Sigmoid colon (tissue), 7 donors: ENCODE measurements at regions of chr12 and their contacts with region 1.

Region 1: GRCh38 chr12:68610370-68611093 is at the start of gene RAP1B:
- DNase-seq: peak; percentile 94
- H3K4me3 ChIP-seq: peak within 1 kb of the TSS; percentile 62 to 94 (median 83)
- H3K27ac ChIP-seq: peak within 1 kb of the TSS; percentile 88 to 99 (median 97)
- H3K4me1 ChIP-seq: peaks cover 0 to 43% (median 33%) of the 10 kb centered on the region in 4 donors
- H3K27me3 ChIP-seq: no peaks in the 10 kb centered on the region
- CTCF ChIP-seq: no peak
- EP300 ChIP-seq: no peak
- POLR2A ChIP-seq: peak; percentile 75 to 78
- total RNA-seq, gene RAP1B: 197 to 251 (median 223) TPM

Region 2: GRCh38 chr12:68358532-68359485 is 251.7 kb before region 1 on chr12:
- intact Hi-C with region 1: loop called (anchors 2 kb)
- DNase-seq: peak; percentile 80
- H3K4me3 ChIP-seq: no peak overlapping the region
- H3K27ac ChIP-seq: peak overlapping the region in 2 of 4 donors; percentile 54 to 68
- H3K4me1 ChIP-seq: peaks cover 0 to 23% (median 13%) of the 10 kb centered on the region in 4 donors
- H3K27me3 ChIP-seq: no peaks in the 10 kb centered on the region
- CTCF ChIP-seq: peak; percentile 37 to 71 (median 62)
- EP300 ChIP-seq: no peak
- POLR2A ChIP-seq: no peak

Region 3: DNA sequence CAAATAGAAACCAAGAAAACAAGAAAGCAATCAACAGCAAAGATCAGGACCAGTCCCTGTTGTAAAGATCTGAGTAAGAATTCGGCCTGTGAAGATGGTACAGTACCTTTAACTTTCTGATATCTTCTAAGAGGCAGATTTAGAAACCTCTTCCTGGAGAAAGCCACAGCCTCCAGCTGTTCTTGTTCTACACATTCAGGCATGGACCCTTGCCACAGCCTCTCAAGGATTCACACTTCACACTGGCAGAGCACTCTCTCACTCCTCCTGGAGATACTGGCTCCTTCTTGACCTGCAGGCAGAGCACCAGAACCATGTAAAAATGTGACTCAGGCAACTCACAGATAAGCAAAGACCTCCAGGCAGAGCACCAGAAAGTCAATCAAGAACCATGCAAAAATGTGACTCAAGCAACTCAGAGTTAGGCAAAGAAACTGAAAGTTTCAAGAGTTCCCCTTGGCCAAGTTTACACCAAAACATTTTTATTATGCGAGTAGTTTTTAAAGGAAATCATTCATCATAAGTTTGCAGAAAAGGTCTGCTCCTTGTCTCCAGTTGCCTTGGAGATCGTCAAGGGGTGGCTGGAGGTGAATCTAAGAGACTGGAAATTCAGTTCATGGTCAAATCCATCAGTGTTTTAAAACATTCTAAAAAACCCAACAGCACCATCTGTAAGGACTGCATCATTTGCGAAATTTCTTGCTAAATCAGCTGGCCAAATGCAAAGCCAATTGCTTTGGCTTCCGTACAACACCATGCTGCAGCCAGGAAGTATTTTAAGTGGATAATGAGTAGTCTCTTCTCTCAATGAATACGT is 159.1 kb before region 1 on chr12:
- intact Hi-C with region 1: loop called (anchors 2 kb)
- DNase-seq: peak; percentile 76
- H3K4me3 ChIP-seq: peak overlapping the region in 1 of 4 donors; percentile 0
- H3K27ac ChIP-seq: peak overlapping the region; percentile 35 to 77 (median 62)
- H3K4me1 ChIP-seq: peaks cover 0 to 45% (median 31%) of the 10 kb centered on the region in 4 donors
- H3K27me3 ChIP-seq: no peaks in the 10 kb centered on the region
- CTCF ChIP-seq: no peak
- EP300 ChIP-seq: no peak
- POLR2A ChIP-seq: no peak

Region 4: GRCh38 chr12:68477261-68477772 is 133.2 kb before region 1 on chr12:
- intact Hi-C with region 1: no loop called
- DNase-seq: no peak
- H3K4me3 ChIP-seq: no peak overlapping the region
- H3K27ac ChIP-seq: peak overlapping the region in 1 of 4 donors; percentile 86
- H3K4me1 ChIP-seq: peaks cover 0 to 20% (median 17%) of the 10 kb centered on the region in 4 donors
- H3K27me3 ChIP-seq: no peaks in the 10 kb centered on the region
- CTCF ChIP-seq: no peak
- EP300 ChIP-seq: no peak
- POLR2A ChIP-seq: no peak

Region 5: GRCh38 chr12:68686595-68687521 is 76.3 kb after region 1 on chr12 and contains the start of gene NUP107:
- intact Hi-C with region 1: loop called (anchors 2 kb)
- DNase-seq: peak; percentile 100
- H3K4me3 ChIP-seq: peak within 1 kb of the TSS; percentile 73 to 88 (median 78)
- H3K27ac ChIP-seq: peak within 1 kb of the TSS; percentile 73 to 85 (median 83)
- H3K4me1 ChIP-seq: peaks cover 0 to 24% (median 16%) of the 10 kb centered on the region in 4 donors
- H3K27me3 ChIP-seq: no peaks in the 10 kb centered on the region
- CTCF ChIP-seq: peak in 1 of 4 experiments; percentile 38
- EP300 ChIP-seq: peak in 1 of 4 donors; percentile 41
- POLR2A ChIP-seq: peak in 1 of 2 donors; percentile 33
- total RNA-seq, gene NUP107: 24.2 to 34.3 (median 31.0) TPM